Activated CD4-positive, alpha-beta memory T cell treated with anti-CD3 and anti-CD28 coated beads, Interleukin-2, amount 10 ng/mL, durations not matched to agents 7 days and 5 days (primary cell): ENCODE measurements at regions of chr1 and their contacts with region 1.

Region 1: DNA sequence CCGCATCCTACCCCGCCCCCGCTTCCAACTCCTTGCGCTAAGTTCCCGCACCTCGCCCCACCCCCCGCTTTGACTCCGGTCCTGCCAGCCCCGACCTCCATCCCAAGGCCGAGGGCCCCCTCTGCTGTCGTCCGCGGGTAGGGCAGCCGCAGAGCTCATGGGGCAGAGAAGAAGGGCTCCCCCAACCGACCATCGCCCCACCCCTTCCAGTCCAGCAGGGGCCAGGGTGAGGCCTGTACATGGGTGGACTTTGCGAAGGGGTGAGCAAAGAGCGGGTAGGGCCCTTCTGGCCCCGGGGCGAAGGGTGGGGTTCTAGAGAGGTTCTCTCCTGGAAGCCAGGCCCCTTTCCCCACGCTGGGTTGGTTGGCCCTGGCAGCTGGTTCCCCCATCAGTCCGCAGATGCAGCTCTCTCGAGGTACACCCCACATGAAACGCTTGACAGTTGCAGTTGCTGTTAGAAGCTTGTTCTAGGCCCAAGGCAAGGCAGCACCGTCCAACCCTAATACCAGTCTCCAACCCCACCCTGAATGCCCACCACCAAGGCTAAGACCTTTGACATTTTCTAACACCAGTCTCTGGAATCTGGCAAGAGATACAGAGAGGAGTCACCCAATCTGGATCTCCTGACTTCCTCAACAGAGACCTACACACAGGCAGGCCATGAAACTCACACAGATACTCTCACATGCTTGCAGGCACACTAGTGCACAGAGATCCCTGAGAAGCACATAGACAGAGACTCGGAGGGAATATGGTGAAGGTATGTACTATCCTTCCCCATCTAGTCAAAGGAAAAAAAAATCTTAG is 25.3 kb upstream of the ADGRB2 start:
- DNase-seq: peak; percentile 96
- H3K4me3 Mint-ChIP-seq: peak overlapping the region; percentile 84
- H3K27ac Mint-ChIP-seq: no peak overlapping the region
- H3K4me1 Mint-ChIP-seq: peaks cover 16% of the 10 kb centered on the region
- H3K27me3 Mint-ChIP-seq: peaks cover 5% of the 10 kb centered on the region

Region 2: DNA sequence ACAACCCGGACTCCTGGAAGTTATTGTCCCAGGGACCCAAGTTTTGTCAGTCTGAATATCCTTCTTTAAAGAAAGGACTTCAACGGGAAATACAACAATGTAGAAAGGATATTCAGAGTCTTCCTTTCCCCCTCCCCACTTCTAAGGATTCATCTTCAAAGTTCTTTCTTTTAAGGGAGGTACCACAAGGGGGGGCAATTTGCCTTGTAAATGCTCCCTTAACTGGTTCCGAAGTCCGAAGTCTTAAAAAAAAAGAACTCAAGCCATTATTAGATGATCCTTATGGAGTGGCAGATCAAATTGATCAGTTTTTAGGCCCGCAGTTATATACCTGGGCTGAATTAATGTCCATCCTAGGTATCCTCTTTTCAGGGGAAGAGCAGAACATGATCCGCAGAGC is 329.4 kb before region 1 on chr1:
- CTCF ChIA-PET with region 1: no interaction called
- POLR2A ChIA-PET with region 1: no interaction called
- DNase-seq: no peak
- H3K4me3 Mint-ChIP-seq: no peak overlapping the region
- H3K27ac Mint-ChIP-seq: no peak overlapping the region
- H3K4me1 Mint-ChIP-seq: no peaks in the 10 kb centered on the region
- H3K27me3 Mint-ChIP-seq: peaks cover 25% of the 10 kb centered on the region

Region 3: DNA sequence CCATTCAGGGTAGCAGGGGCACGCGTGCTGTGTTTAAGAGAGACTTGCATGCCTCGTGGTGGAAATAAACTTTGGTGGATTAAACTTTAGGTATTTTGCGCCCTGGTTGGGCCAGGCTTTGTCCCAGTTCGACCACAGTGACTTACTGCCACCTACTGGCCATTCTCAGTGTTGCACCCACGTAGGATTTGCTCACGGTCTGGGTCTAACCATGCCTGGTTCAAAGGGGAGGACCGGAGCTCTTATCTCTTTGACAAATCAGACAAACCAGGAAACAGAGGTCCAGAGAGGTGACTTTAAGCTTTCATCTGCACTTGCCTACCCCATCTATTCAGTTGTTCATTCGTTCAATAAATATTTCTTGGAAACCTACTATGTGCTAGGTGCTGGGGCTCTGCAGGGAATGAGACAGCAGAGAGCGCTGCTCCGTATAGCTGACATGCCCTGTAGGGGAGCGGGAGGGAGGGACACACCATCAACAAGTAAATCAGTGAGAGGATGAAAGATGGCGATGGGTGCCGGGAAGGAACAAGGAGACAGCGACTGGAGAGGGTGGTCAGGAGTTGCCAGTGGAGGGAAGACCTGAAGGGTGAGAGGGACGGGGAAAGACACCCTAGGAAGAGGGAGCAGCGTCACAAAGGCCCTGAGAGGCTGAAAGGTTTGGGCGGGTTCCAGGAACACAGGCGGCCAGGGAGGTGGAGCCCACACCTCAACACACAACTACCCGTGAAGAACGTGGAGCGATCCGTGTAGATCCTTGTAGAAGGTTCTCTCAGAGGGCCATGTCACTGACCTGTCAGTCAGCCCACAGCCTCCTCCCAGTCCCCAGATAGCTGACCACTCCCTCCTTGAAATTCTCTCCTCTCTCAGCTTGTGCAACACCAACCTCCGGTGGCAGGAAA is 240.3 kb before region 1 on chr1:
- CTCF ChIA-PET with region 1: interaction called, 19 read pairs
- POLR2A ChIA-PET with region 1: no interaction called
- DNase-seq: peak; percentile 91
- H3K4me3 Mint-ChIP-seq: peak overlapping the region; percentile 42
- H3K27ac Mint-ChIP-seq: no peak overlapping the region
- H3K4me1 Mint-ChIP-seq: peaks cover 13% of the 10 kb centered on the region
- H3K27me3 Mint-ChIP-seq: peaks cover 10% of the 10 kb centered on the region

Region 4: DNA sequence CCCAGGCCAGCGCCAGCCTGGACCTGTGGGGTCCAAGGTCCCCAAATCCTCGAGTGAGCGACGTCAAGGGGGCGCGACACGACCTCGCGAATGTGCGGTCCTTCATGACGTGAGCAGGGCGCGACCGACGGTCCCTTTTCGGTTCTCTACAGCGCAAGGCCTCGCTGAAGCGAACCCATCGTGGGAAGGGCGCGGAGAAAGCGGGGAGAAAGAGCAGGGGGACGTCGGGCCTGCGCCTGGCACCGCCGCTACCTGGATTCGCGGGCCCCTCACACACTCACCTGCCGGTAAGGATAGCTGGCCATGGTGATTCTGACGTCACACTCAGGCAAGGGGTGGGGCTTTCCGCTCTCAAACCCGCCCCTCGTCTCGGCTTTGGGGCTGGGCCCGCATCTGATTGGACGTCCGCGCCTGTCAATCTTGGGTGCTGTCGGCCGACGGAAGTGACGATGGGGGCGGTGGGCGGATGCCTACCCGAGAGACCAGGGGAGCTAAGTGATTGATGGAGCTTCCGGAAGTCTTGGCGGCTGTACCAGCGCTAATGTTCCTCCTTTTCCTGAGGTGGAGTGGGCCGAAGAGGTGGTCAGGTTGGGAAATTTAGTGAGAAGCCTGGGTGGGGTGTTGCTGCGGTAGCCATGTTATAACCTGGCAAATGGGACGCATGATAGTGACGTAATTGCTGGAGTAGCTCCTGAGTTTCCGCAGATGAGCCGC is 144.7 kb before region 1 on chr1 and contains the start of gene PEF1:
- CTCF ChIA-PET with region 1: interaction called, 18 read pairs
- POLR2A ChIA-PET with region 1: interaction called, 8 read pairs
- DNase-seq: peak; percentile 99
- H3K4me3 Mint-ChIP-seq: peak within 1 kb of the TSS; percentile 96
- H3K27ac Mint-ChIP-seq: peak within 1 kb of the TSS; percentile 100
- H3K4me1 Mint-ChIP-seq: peaks cover 34% of the 10 kb centered on the region
- H3K27me3 Mint-ChIP-seq: no peaks in the 10 kb centered on the region
- total RNA-seq, gene PEF1: 50.4 to 50.5 TPM

Region 5: GRCh38 chr1:31669786-31670592 is 119.5 kb before region 1 on chr1:
- CTCF ChIA-PET with region 1: interaction called, 45 read pairs
- POLR2A ChIA-PET with region 1: no interaction called
- DNase-seq: no peak
- H3K4me3 Mint-ChIP-seq: peak overlapping the region; percentile 6
- H3K27ac Mint-ChIP-seq: no peak overlapping the region
- H3K4me1 Mint-ChIP-seq: peaks cover 7% of the 10 kb centered on the region
- H3K27me3 Mint-ChIP-seq: peaks cover 26% of the 10 kb centered on the region

Region 6: DNA sequence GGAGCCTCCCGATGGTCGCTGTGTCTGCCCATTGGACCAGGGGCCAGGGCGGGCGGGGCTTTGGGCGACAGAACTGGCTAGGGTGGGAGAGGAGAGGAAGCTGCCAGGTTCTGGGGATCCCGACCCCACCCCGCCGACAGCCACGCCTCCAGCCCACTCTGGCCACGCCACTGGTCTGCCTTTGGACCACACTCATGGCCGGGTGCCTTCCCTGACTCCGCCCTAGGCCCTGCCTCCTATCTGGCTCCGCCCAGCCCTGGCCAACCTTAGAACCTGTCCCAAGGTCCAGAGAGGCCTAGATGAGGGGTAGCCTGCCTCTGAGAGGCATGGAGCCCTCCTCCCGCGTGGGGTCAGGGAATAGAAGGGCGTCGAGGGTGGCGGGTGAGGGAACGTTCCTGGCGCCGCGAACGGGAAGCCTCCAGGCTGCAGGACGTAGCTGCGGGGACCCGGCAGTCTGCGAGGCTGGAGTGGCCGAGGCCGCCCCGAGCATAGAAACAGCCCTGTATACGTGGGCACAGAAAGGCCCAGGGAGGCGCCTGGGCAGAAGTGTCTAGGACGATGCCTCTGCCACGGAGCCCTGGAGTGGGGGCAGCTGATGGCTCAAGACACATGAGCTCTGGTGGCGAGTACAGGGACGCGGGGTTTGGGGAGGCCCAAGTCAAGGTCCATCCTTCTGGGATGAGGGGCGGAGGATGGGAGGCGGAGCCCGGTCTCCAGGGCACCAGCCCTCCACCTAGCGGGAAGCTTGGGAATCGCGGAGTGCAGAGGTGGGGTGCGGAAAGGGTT is 74.2 kb before region 1 on chr1:
- CTCF ChIA-PET with region 1: interaction called, 24 read pairs
- POLR2A ChIA-PET with region 1: no interaction called
- DNase-seq: peak; percentile 25
- H3K4me3 Mint-ChIP-seq: peak overlapping the region; percentile 57
- H3K27ac Mint-ChIP-seq: no peak overlapping the region
- H3K4me1 Mint-ChIP-seq: peaks cover 13% of the 10 kb centered on the region
- H3K27me3 Mint-ChIP-seq: peaks cover 69% of the 10 kb centered on the region

Region 7: GRCh38 chr1:31762726-31763670 is 26.5 kb before region 1 on chr1:
- CTCF ChIA-PET with region 1: interaction called, 28 read pairs
- POLR2A ChIA-PET with region 1: interaction called, 6 read pairs
- DNase-seq: peak; percentile 67
- H3K4me3 Mint-ChIP-seq: peak overlapping the region; percentile 59
- H3K27ac Mint-ChIP-seq: no peak overlapping the region
- H3K4me1 Mint-ChIP-seq: peaks cover 29% of the 10 kb centered on the region
- H3K27me3 Mint-ChIP-seq: peaks cover 60% of the 10 kb centered on the region